ENCODE measurements at regions of chr2 and their contacts with region 1.

Region 1: DNA sequence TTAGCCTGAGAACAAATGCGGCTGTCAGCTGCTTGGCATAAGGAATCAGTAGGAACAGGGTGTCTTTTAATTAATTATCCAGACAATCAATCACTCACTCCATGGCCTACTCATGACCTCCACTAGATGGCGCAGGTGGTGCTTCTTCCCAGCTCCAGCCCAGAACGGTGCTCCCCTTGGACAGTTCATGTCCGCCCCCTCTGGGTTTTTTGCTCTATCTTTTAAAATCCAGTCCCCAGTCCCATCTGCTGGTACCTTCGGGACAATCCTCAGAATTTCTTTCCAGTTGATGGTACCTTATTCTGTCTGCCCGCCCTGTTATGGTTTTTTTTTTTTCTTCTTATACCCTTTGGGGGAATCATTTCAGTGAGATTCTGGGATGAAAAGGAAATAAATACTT is 99.8 kb downstream of the CACNB4 start:
- DNase-seq: peak; percentile 72
- H3K4me3 ChIP-seq: peak overlapping the region in 1 of 2 experiments; percentile 38; a peak in 1 of 4 replicates
- H3K27ac ChIP-seq: no peak overlapping the region
- H3K4me1 ChIP-seq: no peaks in the 10 kb centered on the region
- H3K27me3 ChIP-seq: no peaks in the 10 kb centered on the region
- CTCF ChIP-seq: peak; percentile 85
- EP300 ChIP-seq: no peak
- RAD21 ChIP-seq: peak; percentile 64

Region 2: GRCh38 chr2:151264157-151264835 is 734.8 kb before region 1 on chr2:
- CTCF ChIA-PET with region 1: no interaction called
- POLR2A ChIA-PET with region 1: no interaction called
- DNase-seq: no peak
- H3K4me3 ChIP-seq: no peak overlapping the region
- H3K27ac ChIP-seq: no peak overlapping the region
- H3K4me1 ChIP-seq: peaks cover 3 to 4% of the 10 kb centered on the region in 2 experiments; a peak in 3 of 4 replicates
- H3K27me3 ChIP-seq: no peaks in the 10 kb centered on the region
- CTCF ChIP-seq: no peak
- EP300 ChIP-seq: no peak
- RAD21 ChIP-seq: no peak

Region 3: DNA sequence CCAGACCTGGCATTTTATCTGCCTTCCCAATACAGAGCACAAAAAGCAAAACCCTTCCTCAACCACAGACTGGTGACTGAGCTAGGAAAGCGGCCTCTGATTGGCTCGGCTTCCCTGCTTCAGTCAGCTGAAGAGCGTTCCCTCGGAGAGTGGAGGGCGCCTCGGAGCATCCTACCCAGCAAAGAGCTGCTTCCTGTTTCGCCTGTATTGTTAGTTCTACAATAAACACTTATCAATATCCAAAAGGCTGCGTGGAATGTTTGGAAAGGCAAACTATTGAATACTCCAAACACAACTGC is 25.2 kb before region 1 on chr2:
- CTCF ChIA-PET with region 1: interaction called, 12 read pairs
- POLR2A ChIA-PET with region 1: no interaction called
- DNase-seq: peak; percentile 73
- H3K4me3 ChIP-seq: peak overlapping the region; percentile 11 to 40; a peak in 3 of 4 replicates
- H3K27ac ChIP-seq: peak overlapping the region in 1 of 2 experiments; percentile 89; a peak in 2 of 4 replicates
- H3K4me1 ChIP-seq: peaks cover 0 to 9% of the 10 kb centered on the region in 2 experiments; a peak in 2 of 4 replicates
- H3K27me3 ChIP-seq: no peaks in the 10 kb centered on the region; the same call in 1 of the 2 replicates
- CTCF ChIP-seq: no peak
- EP300 ChIP-seq: no peak
- RAD21 ChIP-seq: no peak; the same call in 1 of the 2 replicates

Region 4: GRCh38 chr2:152012697-152013096 is 13.6 kb after region 1 on chr2:
- CTCF ChIA-PET with region 1: interaction called, 10 read pairs
- POLR2A ChIA-PET with region 1: no interaction called
- DNase-seq: no peak
- H3K4me3 ChIP-seq: no peak overlapping the region
- H3K27ac ChIP-seq: no peak overlapping the region
- H3K4me1 ChIP-seq: no peaks in the 10 kb centered on the region
- H3K27me3 ChIP-seq: peaks cover 4% of the 10 kb centered on the region; the same call in 1 of the 2 replicates
- CTCF ChIP-seq: no peak
- EP300 ChIP-seq: no peak
- RAD21 ChIP-seq: no peak

Measured in SK-N-SH (cell line).